ENCODE measurements at regions of chr19 and their contacts with region 1.

Region 1: DNA sequence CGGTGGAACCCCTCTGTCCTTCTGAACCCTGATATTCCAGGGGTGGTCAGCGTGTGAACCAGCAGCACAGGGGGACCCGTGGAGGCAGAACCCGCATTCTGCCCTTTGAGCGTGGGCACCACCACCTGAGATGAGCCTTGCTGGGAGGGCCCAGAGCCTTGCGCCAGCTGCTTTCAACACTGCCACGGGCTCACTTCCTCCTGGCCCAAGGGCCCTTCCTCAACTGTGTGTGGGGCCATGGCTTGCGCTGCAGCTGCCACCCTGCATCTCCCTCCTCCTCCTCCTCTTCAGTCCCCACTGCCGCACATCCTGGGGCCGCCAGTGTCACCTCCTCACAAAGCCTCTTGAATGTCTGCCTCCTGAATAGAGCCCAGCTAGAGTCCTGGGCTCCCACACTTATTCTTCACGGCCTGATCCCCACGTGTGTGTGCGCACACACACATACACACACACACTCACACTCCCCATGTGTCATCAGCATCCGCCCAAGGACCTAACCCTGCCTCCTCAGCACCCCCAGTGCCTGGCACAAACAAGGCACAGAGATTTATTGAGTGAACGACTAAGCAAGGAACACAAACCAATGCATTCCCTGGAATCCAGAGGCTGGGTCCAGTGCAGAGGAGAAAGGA is 26.9 kb upstream of the TMEM160 start:
- DNase-seq: no peak
- ATAC-seq: no peak
- H3K4me3 Mint-ChIP-seq: no peak overlapping the region
- H3K27ac Mint-ChIP-seq: peak overlapping the region; percentile 22
- H3K4me1 Mint-ChIP-seq: peaks cover 9% of the 10 kb centered on the region
- H3K27me3 Mint-ChIP-seq: no peaks in the 10 kb centered on the region

Region 2: GRCh38 chr19:47107202-47107940 is 32.1 kb after region 1 on chr19:
- CTCF ChIA-PET with region 1: interaction called, 10 read pairs
- POLR2A ChIA-PET with region 1: interaction called, 19 read pairs
- DNase-seq: peak; percentile 62
- ATAC-seq: peak; percentile 22
- H3K4me3 Mint-ChIP-seq: peak overlapping the region; percentile 95
- H3K27ac Mint-ChIP-seq: peak overlapping the region; percentile 86
- H3K4me1 Mint-ChIP-seq: peaks cover 65% of the 10 kb centered on the region
- H3K27me3 Mint-ChIP-seq: no peaks in the 10 kb centered on the region

Measured in activated CD8-positive, alpha-beta T cell treated with anti-CD3 and anti-CD28 coated beads, Interleukin-2, amount 10 ng/mL, durations not matched to agents 7 days and 5 days (primary cell).